ENCODE measurements at regions of chr7 and their contacts with region 1.

Region 1: DNA sequence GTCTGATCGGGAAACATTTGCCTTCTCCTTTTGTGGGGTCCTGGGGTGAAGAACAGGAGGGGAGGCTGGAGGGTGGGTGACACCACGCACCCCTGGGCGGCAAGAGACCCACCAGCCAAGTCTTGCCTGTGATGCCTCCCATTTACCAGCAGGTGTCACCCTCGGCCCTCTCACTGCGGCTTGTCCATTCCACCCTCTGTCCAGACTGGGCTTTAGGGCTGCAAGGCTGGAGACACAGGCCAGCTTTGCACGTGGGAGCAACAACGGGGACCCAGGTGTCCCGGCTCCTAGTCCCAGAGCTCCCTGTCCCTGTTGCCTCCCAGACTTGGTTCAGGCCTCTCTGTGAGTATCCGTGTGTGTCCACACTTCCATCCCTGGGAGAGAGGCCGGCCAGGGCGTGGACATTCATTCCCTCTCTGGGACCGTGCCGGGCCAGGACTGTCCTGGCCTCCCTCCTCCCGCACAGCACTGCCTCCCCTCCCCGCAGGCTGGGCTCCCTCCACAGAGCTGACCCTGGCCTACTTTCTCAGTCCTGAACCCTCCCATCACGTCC is 36.2 kb upstream of the GTF2IRD1 start:
- DNase-seq: peak; percentile 57
- H3K4me3 ChIP-seq: no peak overlapping the region
- H3K27ac ChIP-seq: no peak overlapping the region
- H3K4me1 ChIP-seq: no peaks in the 10 kb centered on the region
- H3K27me3 ChIP-seq: no peaks in the 10 kb centered on the region
- CTCF ChIP-seq: peak; percentile 87 to 94
- POLR2A ChIP-seq: no peak

Region 2: GRCh38 chr7:74324531-74325209 is 92.8 kb before region 1 on chr7:
- CTCF ChIA-PET with region 1: no interaction called
- POLR2A ChIA-PET with region 1: no interaction called
- dilution Hi-C with region 1: no loop called
- intact Hi-C with region 1: no loop called
- DNase-seq: no peak
- H3K4me3 ChIP-seq: no peak overlapping the region
- H3K27ac ChIP-seq: no peak overlapping the region
- H3K4me1 ChIP-seq: no peaks in the 10 kb centered on the region
- H3K27me3 ChIP-seq: no peaks in the 10 kb centered on the region
- CTCF ChIP-seq: no peak
- POLR2A ChIP-seq: no peak

Region 3: GRCh38 chr7:74544706-74545469 is 127.4 kb after region 1 on chr7:
- CTCF ChIA-PET with region 1: interaction called, 6 read pairs
- POLR2A ChIA-PET with region 1: no interaction called
- dilution Hi-C with region 1: no loop called
- intact Hi-C with region 1: loop called (anchors 1 kb)
- DNase-seq: peak; percentile 22
- H3K4me3 ChIP-seq: no peak overlapping the region
- H3K27ac ChIP-seq: no peak overlapping the region
- H3K4me1 ChIP-seq: no peaks in the 10 kb centered on the region
- H3K27me3 ChIP-seq: no peaks in the 10 kb centered on the region
- CTCF ChIP-seq: peak; percentile 42 to 56
- POLR2A ChIP-seq: no peak

Region 4: DNA sequence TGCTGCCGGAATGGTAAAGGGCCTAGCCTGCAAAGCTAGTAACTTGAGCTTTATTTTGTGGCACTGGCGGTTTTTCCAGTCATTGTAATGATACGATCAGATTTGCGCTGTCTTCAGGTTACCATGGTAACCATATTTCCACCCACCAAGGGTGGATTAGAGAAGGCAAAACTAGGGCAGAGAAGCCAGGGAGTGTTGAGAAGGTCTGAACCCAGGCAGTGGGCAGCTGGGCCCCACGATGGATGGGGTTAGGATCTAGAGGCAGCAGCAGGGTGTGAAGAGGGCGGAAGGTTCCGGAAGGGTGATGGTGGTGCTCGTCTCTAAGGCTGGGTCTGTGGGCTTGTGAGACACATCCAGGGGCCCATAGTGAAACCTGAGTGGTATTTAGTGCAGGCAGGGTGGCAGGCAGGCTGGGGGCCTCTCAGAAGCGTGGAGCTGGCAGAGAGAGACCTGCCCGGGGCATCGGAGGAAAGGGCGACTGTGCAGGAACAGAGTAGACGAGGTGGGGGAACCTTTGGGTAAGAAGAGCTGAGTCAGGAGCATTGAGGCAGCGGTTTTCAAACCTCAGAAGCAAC is 152.1 kb after region 1 on chr7:
- CTCF ChIA-PET with region 1: interaction called, 64 read pairs
- POLR2A ChIA-PET with region 1: no interaction called
- dilution Hi-C with region 1: no loop called
- intact Hi-C with region 1: loop called (anchors 1 kb)
- DNase-seq: no peak
- H3K4me3 ChIP-seq: no peak overlapping the region
- H3K27ac ChIP-seq: no peak overlapping the region
- H3K4me1 ChIP-seq: no peaks in the 10 kb centered on the region
- H3K27me3 ChIP-seq: no peaks in the 10 kb centered on the region
- CTCF ChIP-seq: no peak
- POLR2A ChIP-seq: no peak